ENCODE measurements at regions of chr16 and their contacts with region 1.

Region 1: GRCh38 chr16:87278191-87279095 is 38.7 kb downstream of the C16orf95 start:
- DNase-seq: peak; percentile 62
- ATAC-seq: peak; percentile 99
- H3K4me3 ChIP-seq: no peak overlapping the region
- H3K27ac ChIP-seq: no peak overlapping the region
- H3K4me1 ChIP-seq: no peaks in the 10 kb centered on the region
- H3K27me3 ChIP-seq: no peaks in the 10 kb centered on the region
- CTCF ChIP-seq: peak; percentile 100
- EP300 ChIP-seq: no peak
- POLR2A ChIP-seq: no peak
- RAD21 ChIP-seq: peak; percentile 97

Region 2: DNA sequence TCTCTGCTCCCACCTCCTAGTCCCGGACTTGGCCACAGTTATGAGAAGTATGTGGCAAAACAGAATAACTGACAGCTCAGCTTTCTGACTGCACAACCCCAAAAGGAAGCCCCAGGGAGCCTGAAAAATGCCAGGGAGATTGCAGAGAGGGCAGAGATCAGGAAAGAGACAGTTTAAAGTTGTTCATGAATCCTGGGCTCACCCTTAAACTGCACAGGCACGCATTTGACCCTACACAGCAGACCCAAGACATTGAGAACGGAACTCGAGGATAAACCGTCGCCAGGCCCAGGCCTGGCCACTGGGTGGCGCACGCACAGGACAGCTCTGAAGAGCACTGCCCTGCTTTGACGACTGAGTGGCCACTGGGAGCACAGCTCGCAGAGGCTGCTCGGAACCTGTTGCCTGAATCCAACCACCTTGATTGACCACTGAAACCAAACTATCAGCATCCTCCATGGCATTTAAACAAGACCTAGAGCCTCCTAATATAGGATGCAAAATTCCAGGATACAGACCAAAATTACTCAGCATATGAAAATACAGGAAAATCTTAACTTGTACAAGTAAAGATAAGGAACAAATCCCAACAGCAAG is 75.3 kb before region 1 on chr16:
- CTCF ChIA-PET with region 1: interaction called, 74 read pairs
- POLR2A ChIA-PET with region 1: no interaction called
- in situ Hi-C with region 1: loop called (anchors 5 kb)
- intact Hi-C with region 1: no loop called
- DNase-seq: peak; percentile 69
- ATAC-seq: peak; percentile 96
- H3K4me3 ChIP-seq: no peak overlapping the region
- H3K27ac ChIP-seq: no peak overlapping the region
- H3K4me1 ChIP-seq: 0 out of 2 replicates have a peak, but pooled peaks cover 18% of the 10 kb centered on the region
- H3K27me3 ChIP-seq: no peaks in the 10 kb centered on the region; a peak in 1 of 5 replicates
- CTCF ChIP-seq: peak; percentile 97
- EP300 ChIP-seq: no peak
- POLR2A ChIP-seq: no peak
- RAD21 ChIP-seq: peak; percentile 86

Region 3: DNA sequence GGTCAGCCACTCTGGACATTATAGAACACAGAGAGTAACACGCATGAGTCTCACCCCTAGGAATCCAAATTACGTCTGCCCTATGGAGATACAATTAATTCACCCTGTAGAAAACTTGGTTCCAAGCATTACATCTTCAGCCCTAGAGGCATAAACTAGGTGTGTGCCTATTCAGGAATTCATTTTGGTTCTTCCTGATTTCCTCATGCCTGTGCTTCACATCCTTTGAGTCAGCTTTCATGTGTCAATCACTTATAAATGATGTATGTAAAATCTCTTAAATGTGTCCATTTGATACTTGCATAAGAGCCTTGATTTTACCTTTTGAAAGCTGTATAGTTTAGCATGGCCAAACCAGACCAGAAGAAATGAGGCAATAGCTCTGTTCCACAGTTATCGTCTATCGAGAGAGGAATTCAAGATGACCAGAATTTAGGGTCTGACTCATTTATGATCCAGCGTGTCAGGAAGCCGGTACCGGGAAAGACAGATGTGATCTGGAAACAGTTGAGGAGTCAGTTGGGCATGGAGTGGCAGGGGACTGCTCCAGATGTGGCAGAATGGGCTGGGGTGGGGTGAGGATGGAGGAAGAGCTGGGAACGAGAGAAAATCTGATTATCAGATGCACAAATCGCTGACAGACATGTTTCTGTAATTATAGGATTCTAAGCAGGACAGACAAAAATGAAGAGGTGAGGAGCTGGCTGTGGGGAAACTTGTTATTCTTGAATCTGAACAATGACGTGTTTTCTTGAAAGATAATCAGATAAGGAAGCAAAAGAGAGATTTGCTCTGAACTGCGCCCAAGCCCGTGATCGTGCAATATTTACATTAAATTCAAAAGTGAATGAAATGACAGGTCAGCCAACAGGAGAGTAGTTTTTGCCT is 38.0 kb before region 1 on chr16:
- CTCF ChIA-PET with region 1: interaction called, 8 read pairs
- POLR2A ChIA-PET with region 1: interaction called, 3 read pairs
- in situ Hi-C with region 1: no loop called
- intact Hi-C with region 1: loop called (anchors 2 kb)
- DNase-seq: no peak
- ATAC-seq: no peak
- H3K4me3 ChIP-seq: peak overlapping the region in 2 of 3 experiments; percentile 20 to 35; a peak in 2 of 6 replicates
- H3K27ac ChIP-seq: peak overlapping the region; percentile 74
- H3K4me1 ChIP-seq: peaks cover 53% of the 10 kb centered on the region
- H3K27me3 ChIP-seq: no peaks in the 10 kb centered on the region
- CTCF ChIP-seq: no peak
- EP300 ChIP-seq: no peak
- POLR2A ChIP-seq: no peak
- RAD21 ChIP-seq: no peak

Region 4: DNA sequence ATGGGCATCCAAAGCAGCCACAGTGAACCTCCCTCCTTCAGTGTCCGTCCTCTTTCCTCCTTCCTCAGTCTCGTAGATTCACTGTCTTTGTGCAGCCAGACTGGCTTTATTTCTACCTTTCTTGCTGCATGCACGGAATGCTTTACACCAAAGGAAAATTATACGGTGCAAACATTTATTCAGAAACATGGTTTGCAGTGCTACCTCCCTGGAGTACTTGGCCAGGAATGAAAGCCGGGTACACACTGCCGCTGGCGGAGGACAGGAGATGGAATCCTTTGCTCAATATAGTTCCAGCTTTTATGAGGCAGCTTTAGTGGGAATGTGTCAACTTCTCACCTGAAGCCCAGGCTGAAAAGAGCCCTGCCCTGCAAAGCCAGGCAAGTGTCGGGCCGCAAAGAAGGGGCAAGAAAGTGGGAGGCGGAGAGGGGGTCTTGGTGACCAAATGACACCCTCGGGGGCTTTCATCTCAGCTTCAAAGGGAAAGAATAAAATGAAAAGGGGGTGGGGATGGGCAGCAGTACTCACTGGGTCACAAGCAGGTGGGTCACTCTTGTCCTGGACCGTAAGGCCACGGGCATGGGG is 24.3 kb before region 1 on chr16:
- CTCF ChIA-PET with region 1: no interaction called
- POLR2A ChIA-PET with region 1: no interaction called
- in situ Hi-C with region 1: no loop called
- intact Hi-C with region 1: no loop called
- DNase-seq: no peak
- ATAC-seq: no peak
- H3K4me3 ChIP-seq: no peak overlapping the region
- H3K27ac ChIP-seq: no peak overlapping the region
- H3K4me1 ChIP-seq: peaks cover 18% of the 10 kb centered on the region
- H3K27me3 ChIP-seq: no peaks in the 10 kb centered on the region
- CTCF ChIP-seq: no peak
- EP300 ChIP-seq: no peak
- POLR2A ChIP-seq: no peak
- RAD21 ChIP-seq: no peak

Region 5: DNA sequence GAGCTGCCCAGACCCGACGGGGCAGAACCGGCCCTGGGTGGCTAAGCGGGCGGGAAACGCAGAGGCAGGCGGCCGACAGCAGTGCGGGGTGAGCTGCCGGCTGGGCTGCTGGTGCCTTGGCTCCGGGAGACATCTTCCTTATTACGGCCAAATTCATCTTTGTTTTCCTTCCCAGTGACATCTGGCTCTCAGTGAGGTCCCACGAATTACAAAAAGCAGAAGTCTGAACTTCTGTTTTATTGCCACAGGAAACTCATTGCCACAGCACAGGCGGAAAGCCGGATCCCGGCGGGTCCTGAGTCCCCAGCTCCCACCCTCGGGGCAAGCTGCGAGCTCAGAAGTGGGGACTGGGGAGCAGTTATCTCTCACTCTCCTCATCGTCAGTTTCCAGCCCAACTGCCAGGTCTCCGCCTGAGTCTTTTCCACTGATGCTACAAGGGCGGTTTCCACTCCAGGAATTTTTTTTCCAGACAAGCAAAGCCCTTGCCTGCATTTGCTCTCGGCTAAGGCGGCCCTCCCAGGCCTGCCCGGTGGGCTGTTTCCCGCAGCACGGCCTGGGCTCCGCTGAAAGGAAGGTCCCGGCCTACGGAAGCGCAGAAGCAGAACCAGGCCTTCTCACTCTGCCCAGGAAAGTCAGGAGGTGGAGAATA is 1658.2 kb after region 1 on chr16:
- CTCF ChIA-PET with region 1: no interaction called
- POLR2A ChIA-PET with region 1: no interaction called
- in situ Hi-C with region 1: no loop called
- intact Hi-C with region 1: no loop called
- DNase-seq: no peak
- ATAC-seq: peak; percentile 9; the same call in 1 of the 3 replicates
- H3K4me3 ChIP-seq: no peak overlapping the region
- H3K27ac ChIP-seq: no peak overlapping the region
- H3K4me1 ChIP-seq: peaks cover 9% of the 10 kb centered on the region
- H3K27me3 ChIP-seq: peaks cover 49 to 85% of the 10 kb centered on the region in 2 experiments
- CTCF ChIP-seq: no peak
- EP300 ChIP-seq: no peak
- POLR2A ChIP-seq: no peak
- RAD21 ChIP-seq: no peak